HCT116 (cell line): ENCODE measurements at regions of chr11 and their contacts with region 1.

Region 1: GRCh38 chr11:105183987-105184386 is 44.4 kb upstream of the CARD18 start:
- DNase-seq: no peak
- ATAC-seq: no peak
- H3K4me3 ChIP-seq: no peak overlapping the region
- H3K27ac ChIP-seq: no peak overlapping the region
- H3K4me1 ChIP-seq: no peaks in the 10 kb centered on the region
- H3K27me3 ChIP-seq: no peaks in the 10 kb centered on the region
- CTCF ChIP-seq: no peak
- POLR2A ChIP-seq: no peak
- RAD21 ChIP-seq: no peak

Region 2: DNA sequence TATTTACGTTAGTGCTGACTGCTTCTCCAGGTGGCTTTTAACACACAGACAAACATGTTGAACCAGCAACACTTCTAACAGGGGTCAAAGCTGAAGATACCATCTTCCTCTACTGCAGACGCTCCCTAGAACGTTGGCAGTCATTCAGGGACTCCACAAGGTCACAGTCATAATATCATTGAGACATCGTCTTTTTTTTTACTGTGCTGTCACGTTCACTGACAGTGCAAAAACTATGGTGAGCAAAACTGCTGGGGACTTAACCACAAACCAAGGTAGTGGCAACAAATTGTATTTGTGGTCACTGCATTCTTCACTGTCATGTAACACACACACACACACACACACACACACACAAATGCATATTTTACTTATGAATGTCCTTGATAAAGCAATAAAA is 530.6 kb before region 1 on chr11:
- CTCF ChIA-PET with region 1: no interaction called
- POLR2A ChIA-PET with region 1: no interaction called
- RAD21 ChIA-PET with region 1: no interaction called
- intact Hi-C with region 1: no loop called
- DNase-seq: no peak
- ATAC-seq: no peak
- H3K4me3 ChIP-seq: no peak overlapping the region
- H3K27ac ChIP-seq: no peak overlapping the region
- H3K4me1 ChIP-seq: no peaks in the 10 kb centered on the region
- H3K27me3 ChIP-seq: no peaks in the 10 kb centered on the region
- CTCF ChIP-seq: no peak
- POLR2A ChIP-seq: no peak
- RAD21 ChIP-seq: no peak

Region 3: DNA sequence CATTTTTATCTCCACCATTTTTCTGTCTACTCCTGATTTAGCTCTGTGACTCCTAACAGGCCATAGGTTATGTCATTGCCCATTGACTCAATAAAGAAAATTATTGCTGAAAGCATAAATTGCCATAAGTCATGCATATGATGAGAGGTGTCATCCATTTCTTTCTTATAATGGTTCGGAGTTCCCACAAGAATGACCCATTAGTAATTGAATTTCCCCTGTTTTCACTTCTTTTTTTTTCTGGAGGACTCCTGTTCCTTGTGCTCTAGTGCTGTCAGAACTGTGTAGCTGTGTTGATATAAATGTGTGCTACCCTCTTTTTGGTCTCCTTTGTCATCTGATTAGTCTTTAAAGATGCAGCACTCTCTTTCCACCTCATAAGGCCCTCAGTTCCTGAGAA is 21.5 kb before region 1 on chr11:
- CTCF ChIA-PET with region 1: no interaction called
- POLR2A ChIA-PET with region 1: no interaction called
- RAD21 ChIA-PET with region 1: no interaction called
- intact Hi-C with region 1: loop called (anchors 1 kb)
- DNase-seq: no peak
- ATAC-seq: no peak
- H3K4me3 ChIP-seq: no peak overlapping the region
- H3K27ac ChIP-seq: no peak overlapping the region
- H3K4me1 ChIP-seq: no peaks in the 10 kb centered on the region
- H3K27me3 ChIP-seq: no peaks in the 10 kb centered on the region
- CTCF ChIP-seq: no peak
- POLR2A ChIP-seq: no peak
- RAD21 ChIP-seq: no peak

Region 4: DNA sequence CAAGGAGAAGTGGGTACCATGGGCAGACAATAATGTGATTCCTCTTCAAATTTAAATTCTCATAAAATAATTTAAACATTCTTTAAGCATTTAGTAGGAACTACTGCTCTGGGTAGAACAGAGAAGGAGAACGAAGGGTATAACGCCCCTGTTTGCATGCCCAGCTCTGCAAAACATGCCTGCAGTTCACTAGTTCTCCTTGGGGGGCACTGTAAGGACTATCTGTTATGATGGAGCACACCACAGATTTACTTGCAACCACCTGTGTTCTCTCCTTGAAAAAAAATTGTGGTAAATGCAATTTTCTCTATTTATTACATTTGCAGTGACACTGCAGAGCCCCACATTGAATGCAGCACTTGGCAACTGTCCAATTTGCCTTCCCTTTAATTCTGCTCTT is 1734.0 kb after region 1 on chr11:
- CTCF ChIA-PET with region 1: no interaction called
- POLR2A ChIA-PET with region 1: no interaction called
- RAD21 ChIA-PET with region 1: no interaction called
- intact Hi-C with region 1: no loop called
- DNase-seq: peak; percentile 18
- ATAC-seq: peak; percentile 87
- H3K4me3 ChIP-seq: no peak overlapping the region
- H3K27ac ChIP-seq: no peak overlapping the region
- H3K4me1 ChIP-seq: no peaks in the 10 kb centered on the region
- H3K27me3 ChIP-seq: no peaks in the 10 kb centered on the region
- CTCF ChIP-seq: peak in 2 of 3 experiments; percentile 68 to 75; a peak in 4 of 6 replicates
- POLR2A ChIP-seq: no peak
- RAD21 ChIP-seq: no peak